ENCODE measurements at regions of chr9 and their contacts with region 1.

Region 1: GRCh38 chr9:27749838-27750237 is 176.6 kb upstream of the C9orf72 start:
- DNase-seq: no peak
- H3K4me3 ChIP-seq: no peak overlapping the region
- H3K27ac ChIP-seq: no peak overlapping the region
- H3K4me1 ChIP-seq: no peaks in the 10 kb centered on the region
- H3K27me3 ChIP-seq: no peaks in the 10 kb centered on the region
- CTCF ChIP-seq: no peak
- POLR2A ChIP-seq: no peak

Region 2: GRCh38 chr9:27654629-27655285 is 95.1 kb before region 1 on chr9:
- intact Hi-C with region 1: no loop called
- DNase-seq: no peak
- H3K4me3 ChIP-seq: no peak overlapping the region
- H3K27ac ChIP-seq: no peak overlapping the region
- H3K4me1 ChIP-seq: no peaks in the 10 kb centered on the region
- H3K27me3 ChIP-seq: no peaks in the 10 kb centered on the region
- CTCF ChIP-seq: no peak
- POLR2A ChIP-seq: no peak

Region 3: GRCh38 chr9:27688954-27689353 is 60.9 kb before region 1 on chr9:
- intact Hi-C with region 1: no loop called
- DNase-seq: no peak
- H3K4me3 ChIP-seq: no peak overlapping the region
- H3K27ac ChIP-seq: no peak overlapping the region
- H3K4me1 ChIP-seq: no peaks in the 10 kb centered on the region
- H3K27me3 ChIP-seq: no peaks in the 10 kb centered on the region
- CTCF ChIP-seq: no peak
- POLR2A ChIP-seq: no peak

Region 4: DNA sequence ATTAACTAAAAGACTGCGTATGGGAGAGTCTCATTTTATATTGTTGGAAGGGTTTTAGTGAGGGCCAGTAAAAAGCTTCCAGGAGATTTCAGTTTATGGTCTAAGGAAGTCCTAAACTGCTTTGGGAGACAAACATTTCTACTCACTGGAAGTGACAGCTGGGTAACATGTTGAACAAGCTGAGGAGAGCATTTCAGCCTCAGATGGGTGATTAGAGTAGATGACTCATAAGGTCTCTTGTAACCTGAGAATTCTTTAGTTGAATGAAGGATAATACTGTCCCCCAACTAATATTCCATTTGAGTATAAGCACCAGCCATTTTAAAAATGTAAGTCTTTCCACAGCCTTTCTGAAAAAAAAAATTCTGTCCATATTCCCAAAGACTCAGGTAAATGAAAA is 41.5 kb after region 1 on chr9:
- intact Hi-C with region 1: loop called (anchors 10 kb)
- DNase-seq: no peak
- H3K4me3 ChIP-seq: no peak overlapping the region
- H3K27ac ChIP-seq: no peak overlapping the region
- H3K4me1 ChIP-seq: no peaks in the 10 kb centered on the region
- H3K27me3 ChIP-seq: no peaks in the 10 kb centered on the region
- CTCF ChIP-seq: no peak
- POLR2A ChIP-seq: no peak

Region 5: DNA sequence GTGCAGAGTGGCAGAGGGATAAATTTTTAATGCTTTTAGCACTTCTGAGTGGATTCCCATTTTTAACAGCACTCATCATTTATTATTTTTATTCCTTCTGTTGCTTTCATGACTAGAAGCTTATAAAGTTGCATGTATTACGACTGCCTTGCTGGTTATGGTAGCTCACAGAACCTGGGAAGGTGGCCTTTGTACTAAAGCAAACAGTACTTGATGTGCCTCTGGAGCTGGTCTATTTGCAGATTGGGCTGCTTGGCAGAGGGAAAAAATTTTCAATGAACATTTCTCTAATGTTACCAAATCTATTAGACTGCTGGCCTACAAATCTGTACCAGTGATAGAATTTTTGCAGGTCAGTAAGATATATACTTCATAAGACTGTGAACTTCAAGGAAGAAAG is 98.0 kb after region 1 on chr9:
- intact Hi-C with region 1: no loop called
- DNase-seq: no peak
- H3K4me3 ChIP-seq: no peak overlapping the region
- H3K27ac ChIP-seq: no peak overlapping the region
- H3K4me1 ChIP-seq: no peaks in the 10 kb centered on the region
- H3K27me3 ChIP-seq: no peaks in the 10 kb centered on the region
- CTCF ChIP-seq: no peak
- POLR2A ChIP-seq: no peak